ENCODE measurements at regions of chr2 and their contacts with region 1.

Region 1: GRCh38 chr2:219543601-219544358 is at the starts of genes CHPF and TMEM198:
- H3K4me3 ChIP-seq: peak within 1 kb of the TSS; percentile 69
- H3K27ac ChIP-seq: peak within 1 kb of the TSS; percentile 73; the same call in 1 of the 2 replicates
- H3K4me1 ChIP-seq: no peaks in the 10 kb centered on the region
- CTCF ChIP-seq: no peak

Region 2: GRCh38 chr2:219498280-219499057 is 45.3 kb before region 1 on chr2 and contains the start of gene GMPPA:
- CTCF ChIA-PET with region 1: interaction called, 11 read pairs
- POLR2A ChIA-PET with region 1: interaction called, 6 read pairs
- H3K4me3 ChIP-seq: peak within 1 kb of the TSS; percentile 69
- H3K27ac ChIP-seq: peak within 1 kb of the TSS; percentile 33; the same call in 1 of the 2 replicates
- H3K4me1 ChIP-seq: peaks cover 8% of the 10 kb centered on the region; the same call in 1 of the 2 replicates
- CTCF ChIP-seq: peak; percentile 28; the same call in 1 of the 2 replicates

Region 3: GRCh38 chr2:219560037-219560892 is 16.5 kb after region 1 on chr2:
- CTCF ChIA-PET with region 1: interaction called, 13 read pairs
- POLR2A ChIA-PET with region 1: interaction called, 5 read pairs
- H3K4me3 ChIP-seq: no peak overlapping the region
- H3K27ac ChIP-seq: no peak overlapping the region
- H3K4me1 ChIP-seq: no peaks in the 10 kb centered on the region
- CTCF ChIP-seq: no peak

Region 4: GRCh38 chr2:219597552-219598307 is 54.0 kb after region 1 on chr2 and contains the start of gene STK11IP:
- CTCF ChIA-PET with region 1: interaction called, 13 read pairs
- POLR2A ChIA-PET with region 1: interaction called, 9 read pairs
- H3K4me3 ChIP-seq: peak within 1 kb of the TSS; percentile 84
- H3K27ac ChIP-seq: peak within 1 kb of the TSS; percentile 85
- H3K4me1 ChIP-seq: peaks cover 6% of the 10 kb centered on the region
- CTCF ChIP-seq: no peak

Region 5: DNA sequence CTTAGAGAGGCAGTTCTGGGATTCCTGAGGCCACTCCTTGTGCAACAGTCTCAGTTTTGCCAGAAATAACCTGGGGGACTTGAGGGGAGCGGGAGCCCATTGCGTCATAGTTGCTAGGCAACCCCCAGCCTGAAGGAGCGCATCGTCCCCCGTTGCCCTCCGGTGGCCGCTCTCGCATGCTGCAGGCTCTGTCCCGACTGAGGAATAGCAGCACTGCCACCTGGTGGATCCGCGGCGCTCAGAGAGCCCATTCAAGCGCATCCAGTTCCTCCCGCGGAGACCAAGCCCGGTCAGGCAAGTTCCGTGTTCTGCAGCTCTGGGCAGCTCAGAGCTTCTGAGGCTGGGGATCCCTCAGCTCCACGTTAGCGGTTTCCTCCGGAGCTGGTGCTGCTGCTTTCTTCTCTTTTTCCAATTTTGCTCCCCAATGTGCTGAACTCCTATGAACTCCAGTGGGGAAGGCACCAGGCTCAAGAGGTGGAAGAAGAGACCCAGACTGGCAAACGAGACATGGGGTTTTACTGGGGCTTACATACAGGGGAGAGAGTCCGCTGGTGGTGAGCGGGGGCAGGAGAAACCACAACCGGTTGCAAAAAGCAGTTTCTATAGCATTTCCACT is 98.8 kb after region 1 on chr2:
- CTCF ChIA-PET with region 1: interaction called, 112 read pairs
- POLR2A ChIA-PET with region 1: interaction called, 3 read pairs
- H3K4me3 ChIP-seq: no peak overlapping the region
- H3K27ac ChIP-seq: no peak overlapping the region
- H3K4me1 ChIP-seq: no peaks in the 10 kb centered on the region
- CTCF ChIP-seq: peak; percentile 100

Measured in HEK293 (cell line).